ENCODE measurements at regions of chr19 and their contacts with region 1.

Region 1: GRCh38 chr19:48321622-48322591 is 3.4 kb upstream of the EMP3 start:
- DNase-seq: peak; percentile 99
- H3K4me3 Mint-ChIP-seq: peak overlapping the region; percentile 92
- H3K27ac Mint-ChIP-seq: peak overlapping the region; percentile 99
- H3K4me1 Mint-ChIP-seq: peaks cover 57% of the 10 kb centered on the region
- H3K27me3 Mint-ChIP-seq: no peaks in the 10 kb centered on the region

Region 2: DNA sequence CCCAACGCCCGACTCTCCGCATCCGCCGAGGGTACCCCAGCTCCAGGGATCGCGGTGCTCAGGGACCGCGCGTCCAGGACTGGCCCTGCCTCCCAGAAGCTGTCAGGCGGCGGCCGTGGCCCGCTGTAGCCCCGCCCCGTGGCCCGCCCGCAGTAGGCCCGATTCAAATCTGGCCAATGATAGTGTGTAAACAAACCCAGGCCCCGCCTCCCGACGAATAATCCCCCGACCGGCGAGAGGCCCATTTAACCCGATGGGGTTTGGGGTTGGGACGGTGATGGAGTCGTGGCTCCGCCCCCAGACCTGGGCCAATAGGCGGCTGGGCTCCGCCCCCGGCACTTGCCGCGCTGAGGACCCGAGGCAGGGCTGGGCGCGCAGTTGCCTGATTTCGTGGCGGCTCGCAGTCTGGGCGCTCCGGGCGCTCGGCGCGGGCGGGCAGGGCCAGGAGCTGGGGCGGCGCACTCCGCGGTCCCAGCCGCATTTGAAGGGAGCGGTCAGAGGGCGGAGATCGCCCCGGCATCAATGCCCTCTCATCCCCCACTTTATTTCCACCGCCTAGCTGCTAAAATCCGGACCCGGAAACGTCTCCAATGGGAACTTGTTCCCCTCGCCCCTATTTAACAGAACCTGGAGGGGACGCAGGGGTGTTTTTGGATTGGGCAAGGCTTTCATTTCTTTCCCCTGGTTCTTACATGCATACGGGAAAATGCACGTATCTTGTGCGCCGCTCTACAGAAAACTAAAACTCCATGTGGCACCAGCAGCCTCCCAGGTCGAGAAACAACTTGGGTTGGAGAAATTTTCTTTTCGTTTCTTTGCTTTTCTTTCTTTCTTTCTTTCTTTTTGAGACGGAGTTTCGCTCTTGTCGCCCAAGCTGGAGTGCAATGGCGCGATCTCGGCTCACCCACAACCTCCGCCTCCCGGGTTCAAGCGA is 721.4 kb before region 1 on chr19:
- CTCF ChIA-PET with region 1: no interaction called
- intact Hi-C with region 1: loop called (anchors 10 kb)
- DNase-seq: peak; percentile 100
- H3K4me3 Mint-ChIP-seq: peak overlapping the region; percentile 85
- H3K27ac Mint-ChIP-seq: peak overlapping the region; percentile 88
- H3K4me1 Mint-ChIP-seq: peaks cover 17% of the 10 kb centered on the region
- H3K27me3 Mint-ChIP-seq: no peaks in the 10 kb centered on the region

Region 3: DNA sequence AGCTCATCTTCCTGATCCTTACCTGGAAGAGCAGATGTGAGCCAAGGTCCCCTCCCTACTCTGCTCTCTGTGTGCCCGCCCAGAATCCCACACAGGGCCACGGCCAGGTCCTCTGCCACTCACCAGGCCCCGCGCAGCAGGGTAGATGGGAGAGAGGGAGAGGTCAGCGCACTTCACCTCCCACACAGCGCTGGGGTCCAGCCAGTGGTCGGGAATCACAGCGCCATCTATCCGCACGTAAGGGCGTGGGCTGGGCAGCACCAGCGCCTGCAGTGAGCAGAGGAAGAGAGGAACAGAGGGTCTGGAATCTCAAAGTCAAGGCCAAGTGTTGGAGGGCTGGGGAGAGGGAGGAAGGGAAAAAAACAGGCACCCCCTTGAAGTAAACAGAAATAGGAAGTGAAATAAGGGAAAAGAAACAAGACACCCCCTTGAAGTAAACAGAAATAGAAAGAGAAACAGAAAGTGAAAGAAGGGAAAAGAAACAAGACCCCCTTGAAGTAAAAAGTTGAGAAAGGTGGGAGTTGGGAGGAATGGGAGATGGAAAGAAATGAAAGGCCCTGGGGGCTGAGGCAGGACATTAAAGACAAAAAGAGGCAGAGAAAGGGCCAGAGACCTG is 204.3 kb before region 1 on chr19:
- CTCF ChIA-PET with region 1: no interaction called
- intact Hi-C with region 1: no loop called
- DNase-seq: no peak
- H3K4me3 Mint-ChIP-seq: no peak overlapping the region
- H3K27ac Mint-ChIP-seq: peak overlapping the region; percentile 54
- H3K4me1 Mint-ChIP-seq: peaks cover 16% of the 10 kb centered on the region
- H3K27me3 Mint-ChIP-seq: no peaks in the 10 kb centered on the region

Region 4: GRCh38 chr19:48391107-48391986 is 69.4 kb after region 1 on chr19 and contains the start of gene KDELR1:
- CTCF ChIA-PET with region 1: interaction called, 3 read pairs
- intact Hi-C with region 1: loop called (anchors 2 kb)
- DNase-seq: peak; percentile 73
- H3K4me3 Mint-ChIP-seq: peak within 1 kb of the TSS; percentile 94
- H3K27ac Mint-ChIP-seq: peak within 1 kb of the TSS; percentile 90
- H3K4me1 Mint-ChIP-seq: peaks cover 36% of the 10 kb centered on the region
- H3K27me3 Mint-ChIP-seq: peaks cover 27% of the 10 kb centered on the region
- total RNA-seq, gene KDELR1: 81.5 to 83.8 TPM

Region 5: GRCh38 chr19:48492925-48493717 is 171.2 kb after region 1 on chr19:
- CTCF ChIA-PET with region 1: no interaction called
- intact Hi-C with region 1: loop called (anchors 2 kb)
- DNase-seq: peak; percentile 86
- H3K4me3 Mint-ChIP-seq: peak overlapping the region; percentile 62
- H3K27ac Mint-ChIP-seq: no peak overlapping the region
- H3K4me1 Mint-ChIP-seq: peaks cover 31% of the 10 kb centered on the region
- H3K27me3 Mint-ChIP-seq: peaks cover 38% of the 10 kb centered on the region

Region 6: GRCh38 chr19:48618916-48619691 is 297.2 kb after region 1 on chr19 and contains the starts of genes RPL18 and SPHK2:
- CTCF ChIA-PET with region 1: no interaction called
- intact Hi-C with region 1: loop called (anchors 1 kb)
- DNase-seq: peak; percentile 95
- H3K4me3 Mint-ChIP-seq: peak within 1 kb of the TSS; percentile 99
- H3K27ac Mint-ChIP-seq: peak within 1 kb of the TSS; percentile 99
- H3K4me1 Mint-ChIP-seq: peaks cover 53% of the 10 kb centered on the region
- H3K27me3 Mint-ChIP-seq: no peaks in the 10 kb centered on the region
- total RNA-seq, gene RPL18: 2,373 to 2,473 TPM
- total RNA-seq, gene SPHK2: 20.1 to 20.6 TPM